ENCODE measurements at regions of chr12 and their contacts with region 1.

Region 1: GRCh38 chr12:122871851-122872780 is 23.8 kb downstream of the VPS37B start:
- DNase-seq: no peak
- H3K4me3 Mint-ChIP-seq: peak overlapping the region; percentile 67
- H3K27ac Mint-ChIP-seq: peak overlapping the region; percentile 74
- H3K4me1 Mint-ChIP-seq: peaks cover 68% of the 10 kb centered on the region
- H3K27me3 Mint-ChIP-seq: peaks cover 8% of the 10 kb centered on the region

Region 2: DNA sequence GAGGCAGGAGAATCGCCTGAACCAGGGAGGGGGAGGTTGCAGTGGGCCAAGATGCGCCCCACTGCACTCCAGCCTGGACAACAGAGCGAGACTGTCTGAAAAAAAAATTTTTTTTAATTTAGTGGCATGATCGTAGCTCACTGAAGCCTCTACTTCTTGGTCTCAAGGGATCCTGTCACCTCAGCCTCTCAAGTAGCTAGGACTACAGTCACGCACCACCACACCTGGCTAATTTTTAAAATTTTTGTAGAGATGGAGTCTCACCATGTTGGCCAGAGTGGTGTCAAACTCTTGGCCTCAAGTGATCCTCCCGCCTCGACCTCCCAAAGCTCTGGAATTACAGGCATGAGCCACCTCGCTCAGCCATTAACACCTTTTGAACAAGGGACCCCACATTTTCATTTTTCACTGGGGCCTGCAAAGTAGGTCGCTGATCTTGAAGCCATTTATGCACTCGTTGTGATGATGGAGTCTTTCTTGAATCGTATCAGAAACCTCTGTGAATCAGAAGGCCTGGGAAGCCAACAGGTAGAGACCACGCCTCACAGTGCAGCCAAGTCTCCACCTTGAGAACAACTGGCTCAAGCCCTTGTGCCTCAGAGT is 147.4 kb before region 1 on chr12:
- intact Hi-C with region 1: no loop called
- DNase-seq: no peak
- H3K4me3 Mint-ChIP-seq: no peak overlapping the region
- H3K27ac Mint-ChIP-seq: no peak overlapping the region
- H3K4me1 Mint-ChIP-seq: peaks cover 68% of the 10 kb centered on the region
- H3K27me3 Mint-ChIP-seq: no peaks in the 10 kb centered on the region

Region 3: GRCh38 chr12:122836027-122836921 is 35.8 kb before region 1 on chr12:
- intact Hi-C with region 1: loop called (anchors 2 kb)
- DNase-seq: peak; percentile 48
- H3K4me3 Mint-ChIP-seq: peak overlapping the region; percentile 97
- H3K27ac Mint-ChIP-seq: peak overlapping the region; percentile 91
- H3K4me1 Mint-ChIP-seq: peaks cover 29% of the 10 kb centered on the region
- H3K27me3 Mint-ChIP-seq: peaks cover 25% of the 10 kb centered on the region

Region 4: DNA sequence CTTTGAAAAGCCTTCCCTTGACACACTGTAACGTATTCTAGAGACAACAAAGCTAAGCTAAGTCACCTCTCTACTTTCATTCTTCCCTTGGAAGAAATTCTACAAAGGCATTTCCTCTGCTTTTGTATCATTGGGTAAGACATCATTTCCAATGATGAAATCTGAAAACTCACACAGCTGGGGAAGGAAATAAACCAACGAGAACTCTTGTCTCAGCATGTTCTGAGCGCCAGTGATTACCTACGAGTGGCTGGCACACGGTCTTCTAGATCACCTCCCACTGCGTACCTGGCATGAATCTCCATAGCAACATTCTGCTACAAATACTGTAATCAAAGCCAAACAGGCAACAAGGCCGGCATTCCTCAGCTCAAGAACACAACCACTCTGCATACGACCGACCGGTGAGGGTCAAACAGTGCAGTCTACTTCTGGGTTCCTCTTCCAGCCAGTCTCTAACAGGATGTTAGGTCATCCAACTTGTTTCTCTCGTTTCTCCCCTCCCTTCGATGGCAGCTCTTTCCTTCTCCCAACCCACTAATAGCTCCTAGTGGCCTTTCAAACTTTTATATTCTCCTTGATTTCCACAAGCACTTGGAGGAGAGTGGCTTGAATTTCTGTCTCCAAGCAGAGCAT is 16.2 kb after region 1 on chr12:
- intact Hi-C with region 1: loop called (anchors 1 kb)
- DNase-seq: peak; percentile 40
- H3K4me3 Mint-ChIP-seq: peak overlapping the region; percentile 81
- H3K27ac Mint-ChIP-seq: peak overlapping the region; percentile 90
- H3K4me1 Mint-ChIP-seq: peaks cover 65% of the 10 kb centered on the region
- H3K27me3 Mint-ChIP-seq: peaks cover 5% of the 10 kb centered on the region

Region 5: DNA sequence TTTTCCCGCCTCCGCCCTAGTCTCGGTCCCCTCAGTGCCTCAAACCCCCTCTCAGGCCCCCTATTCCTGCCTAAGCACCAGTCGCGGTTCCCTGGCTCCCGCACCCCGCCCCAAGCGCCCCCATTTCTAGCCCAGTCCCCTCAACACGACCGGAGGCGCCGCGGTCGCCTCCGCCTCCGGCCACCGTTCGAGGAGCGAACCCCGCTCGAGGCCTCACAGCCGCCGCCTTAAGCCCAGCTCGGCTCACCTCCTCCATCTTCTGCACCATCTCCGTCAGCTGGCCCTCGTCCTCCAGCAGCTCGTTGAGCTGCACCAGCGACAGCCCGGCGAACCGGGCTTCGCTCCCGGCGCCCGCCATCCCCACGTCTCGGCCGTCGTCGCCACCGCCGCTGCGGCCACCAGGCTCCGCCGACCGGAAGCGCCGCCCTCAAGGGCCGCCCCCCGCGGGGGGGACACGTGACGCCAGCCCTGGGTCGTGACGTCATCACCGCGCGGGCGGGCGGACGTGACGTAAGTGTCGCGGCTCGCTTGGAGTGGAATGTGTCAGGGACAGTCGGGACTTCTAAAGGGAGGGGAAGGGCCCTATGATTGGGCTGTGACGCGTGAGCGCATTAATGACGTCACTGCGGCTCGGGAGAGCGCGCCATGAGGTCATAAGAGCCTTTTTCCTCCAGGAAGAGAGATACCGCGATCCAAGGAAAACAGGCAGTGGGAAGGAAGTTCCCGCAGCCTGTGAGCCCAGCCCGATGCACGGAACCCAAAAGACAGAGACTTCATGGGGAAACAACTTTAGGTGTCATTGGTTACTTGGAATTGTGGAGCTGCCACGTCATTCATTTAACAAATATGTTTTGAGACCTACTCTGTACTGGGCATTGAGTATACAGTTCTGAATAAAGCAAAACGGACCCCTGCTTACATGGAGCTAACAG is 23.9 kb after region 1 on chr12 and contains the start of gene VPS37B:
- intact Hi-C with region 1: loop called (anchors 1 kb)
- DNase-seq: peak; percentile 87
- H3K4me3 Mint-ChIP-seq: peak within 1 kb of the TSS; percentile 91
- H3K27ac Mint-ChIP-seq: peak within 1 kb of the TSS; percentile 91
- H3K4me1 Mint-ChIP-seq: peaks cover 93% of the 10 kb centered on the region
- H3K27me3 Mint-ChIP-seq: peaks cover 5% of the 10 kb centered on the region
- total RNA-seq, gene VPS37B: 12.7 and 14.3 TPM in 2 replicates

Region 6: GRCh38 chr12:122946690-122947341 is 74.7 kb after region 1 on chr12:
- intact Hi-C with region 1: loop called (anchors 1 kb)
- DNase-seq: peak; percentile 80
- H3K4me3 Mint-ChIP-seq: peak overlapping the region; percentile 49
- H3K27ac Mint-ChIP-seq: peak overlapping the region; percentile 73
- H3K4me1 Mint-ChIP-seq: peaks cover 43% of the 10 kb centered on the region
- H3K27me3 Mint-ChIP-seq: peaks cover 1% of the 10 kb centered on the region